Left cardiac atrium (tissue), 4 donors: ENCODE measurements at regions of chr4 and their contacts with region 1.

Region 1: GRCh38 chr4:52014903-52015302 is 5.3 kb downstream of the LRRC66 start:
- DNase-seq: no peak
- ATAC-seq: no peak

Region 2: GRCh38 chr4:51901363-51901762 is 113.5 kb before region 1 on chr4:
- intact Hi-C with region 1: loop called (anchors 5 to 10 kb)
- DNase-seq: peak; percentile 22
- ATAC-seq: no peak

Region 3: GRCh38 chr4:53233114-53233795 is 1218.4 kb after region 1 on chr4:
- intact Hi-C with region 1: no loop called
- DNase-seq: no peak
- ATAC-seq: no peak